Activated T-helper 2 cell treated with anti-CD3 and anti-CD28 coated beads, Interferon-gamma antibody, Interleukin-2, Interleukin-4, amounts not matched to agents 10 μg/mL and 5 μg/mL and 100 μg/mL, durations not matched to agents 14 hours and 24 hours and 36 hours (primary cell): ENCODE measurements at regions of chr1 and their contacts with region 1.

Region 1: DNA sequence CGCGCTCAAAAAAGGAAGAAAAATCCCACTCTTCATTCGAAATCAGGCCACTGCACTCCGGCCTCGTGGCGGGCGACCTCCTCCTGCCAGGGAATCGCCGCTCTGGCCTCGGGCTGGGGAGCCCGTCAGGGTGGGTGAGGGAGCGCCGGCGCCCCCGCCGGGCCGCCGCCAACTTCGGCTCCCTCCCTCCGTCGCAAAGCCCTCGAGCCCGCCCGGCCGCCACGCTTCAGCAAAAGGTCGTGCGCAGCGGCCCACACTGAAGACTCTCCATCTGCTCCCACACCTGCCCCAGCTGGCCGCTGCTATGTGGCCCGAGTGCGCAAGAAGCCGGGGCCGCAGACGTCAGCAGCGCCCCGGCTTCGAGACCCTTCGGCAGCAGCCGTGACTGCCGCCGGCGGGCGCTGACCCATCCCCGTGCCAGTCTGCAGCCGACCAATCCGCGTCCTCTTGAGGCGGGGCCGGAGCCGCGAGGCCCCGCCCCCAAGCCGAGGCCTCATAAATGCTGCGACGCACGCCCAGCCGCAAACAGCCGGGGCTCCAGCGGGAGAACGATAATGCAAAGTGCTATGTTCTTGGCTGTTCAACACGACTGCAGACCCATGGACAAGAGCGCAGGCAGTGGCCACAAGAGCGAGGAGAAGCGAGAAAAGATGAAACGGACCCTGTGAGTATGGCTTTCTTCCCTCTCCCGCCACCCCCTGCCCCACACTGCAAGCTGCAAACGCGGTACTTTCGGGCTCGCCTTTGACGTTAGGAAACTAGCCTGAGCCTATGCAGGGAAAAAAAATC is at the start of gene RGS2:
- DNase-seq: peak; percentile 82
- H3K4me3 Mint-ChIP-seq: peak within 1 kb of the TSS; percentile 95
- H3K27ac Mint-ChIP-seq: peak within 1 kb of the TSS; percentile 93
- H3K4me1 Mint-ChIP-seq: peaks cover 38% of the 10 kb centered on the region
- H3K27me3 Mint-ChIP-seq: peaks cover 7% of the 10 kb centered on the region
- total RNA-seq, gene RGS2: 5.0 and 5.8 TPM in 2 replicates

Region 2: GRCh38 chr1:192530254-192530653 is 278.5 kb before region 1 on chr1:
- intact Hi-C with region 1: loop called (anchors 5 kb)
- DNase-seq: no peak
- H3K4me3 Mint-ChIP-seq: peak overlapping the region; percentile 9
- H3K27ac Mint-ChIP-seq: no peak overlapping the region
- H3K4me1 Mint-ChIP-seq: peaks cover 39% of the 10 kb centered on the region
- H3K27me3 Mint-ChIP-seq: peaks cover 9% of the 10 kb centered on the region

Region 3: GRCh38 chr1:192620071-192620635 is 188.6 kb before region 1 on chr1:
- intact Hi-C with region 1: no loop called
- DNase-seq: no peak
- H3K4me3 Mint-ChIP-seq: no peak overlapping the region
- H3K27ac Mint-ChIP-seq: no peak overlapping the region
- H3K4me1 Mint-ChIP-seq: no peaks in the 10 kb centered on the region
- H3K27me3 Mint-ChIP-seq: peaks cover 3% of the 10 kb centered on the region

Region 4: GRCh38 chr1:192639607-192640368 is 168.9 kb before region 1 on chr1:
- intact Hi-C with region 1: loop called (anchors 10 kb)
- DNase-seq: no peak
- H3K4me3 Mint-ChIP-seq: no peak overlapping the region
- H3K27ac Mint-ChIP-seq: peak overlapping the region; percentile 39
- H3K4me1 Mint-ChIP-seq: peaks cover 11% of the 10 kb centered on the region
- H3K27me3 Mint-ChIP-seq: peaks cover 7% of the 10 kb centered on the region

Region 5: GRCh38 chr1:192967901-192968300 is 159.2 kb after region 1 on chr1:
- intact Hi-C with region 1: no loop called
- DNase-seq: no peak
- H3K4me3 Mint-ChIP-seq: no peak overlapping the region
- H3K27ac Mint-ChIP-seq: no peak overlapping the region
- H3K4me1 Mint-ChIP-seq: peaks cover 4% of the 10 kb centered on the region
- H3K27me3 Mint-ChIP-seq: no peaks in the 10 kb centered on the region

Region 6: GRCh38 chr1:192983349-192983980 is 174.8 kb after region 1 on chr1:
- intact Hi-C with region 1: loop called (anchors 2 kb)
- DNase-seq: no peak
- H3K4me3 Mint-ChIP-seq: no peak overlapping the region
- H3K27ac Mint-ChIP-seq: peak overlapping the region; percentile 75
- H3K4me1 Mint-ChIP-seq: peaks cover 35% of the 10 kb centered on the region
- H3K27me3 Mint-ChIP-seq: no peaks in the 10 kb centered on the region

Region 7: DNA sequence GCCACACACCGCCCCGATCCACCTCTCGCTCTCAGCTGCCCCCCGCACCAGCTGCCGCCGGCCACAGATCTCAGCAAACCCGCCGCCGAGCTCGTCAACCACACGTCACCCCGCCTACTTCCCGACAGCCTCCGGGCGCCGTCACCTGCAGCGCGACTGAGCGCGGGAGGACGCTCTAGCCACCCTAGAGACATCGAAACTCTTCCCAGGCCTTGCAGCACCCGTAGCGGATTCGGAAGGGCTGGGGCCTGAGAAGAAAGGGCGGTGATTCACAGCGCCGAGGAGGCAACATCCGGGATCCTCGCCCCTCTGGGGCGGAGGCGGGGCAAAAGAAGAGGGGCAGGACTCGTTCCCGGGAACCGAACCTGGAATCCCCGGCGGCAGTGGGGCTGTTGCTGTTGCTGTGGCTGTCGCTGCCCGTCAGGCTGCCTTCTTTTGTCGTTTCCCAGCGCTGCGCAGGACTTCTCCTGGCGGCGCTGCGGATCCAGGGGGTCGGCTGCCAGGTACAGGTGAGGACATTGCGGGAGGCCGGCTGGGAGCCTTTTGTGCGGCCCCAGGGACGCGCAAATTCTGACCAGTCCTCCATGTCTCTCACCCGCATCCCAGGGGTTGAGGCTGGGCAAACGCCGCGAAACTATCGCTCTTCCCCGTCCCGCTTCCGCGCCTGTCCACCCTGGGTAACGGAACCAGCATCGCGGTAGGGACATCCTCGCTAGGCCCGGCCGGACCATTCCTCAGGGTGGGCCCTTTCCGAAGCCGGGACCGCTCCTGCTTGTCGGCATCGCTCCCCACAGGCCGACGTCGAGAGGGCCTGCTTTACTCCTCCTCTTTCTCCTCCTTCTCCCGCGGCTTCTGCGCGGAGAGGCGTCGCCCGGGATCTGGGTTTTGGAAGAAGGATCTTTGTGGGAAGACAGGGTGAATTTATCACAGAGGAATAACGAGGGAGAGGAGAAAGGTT is 250.8 kb after region 1 on chr1 and contains the starts of genes RO60 and UCHL5:
- intact Hi-C with region 1: loop called (anchors 1 kb)
- DNase-seq: peak; percentile 95
- H3K4me3 Mint-ChIP-seq: peak within 1 kb of the TSS; percentile 98
- H3K27ac Mint-ChIP-seq: peak within 1 kb of the TSS; percentile 99
- H3K4me1 Mint-ChIP-seq: peaks cover 47% of the 10 kb centered on the region
- H3K27me3 Mint-ChIP-seq: no peaks in the 10 kb centered on the region
- total RNA-seq, gene RO60: 71.4 and 72.7 TPM in 2 replicates
- total RNA-seq, gene UCHL5: 77.6 and 78.5 TPM in 2 replicates

Region 8: DNA sequence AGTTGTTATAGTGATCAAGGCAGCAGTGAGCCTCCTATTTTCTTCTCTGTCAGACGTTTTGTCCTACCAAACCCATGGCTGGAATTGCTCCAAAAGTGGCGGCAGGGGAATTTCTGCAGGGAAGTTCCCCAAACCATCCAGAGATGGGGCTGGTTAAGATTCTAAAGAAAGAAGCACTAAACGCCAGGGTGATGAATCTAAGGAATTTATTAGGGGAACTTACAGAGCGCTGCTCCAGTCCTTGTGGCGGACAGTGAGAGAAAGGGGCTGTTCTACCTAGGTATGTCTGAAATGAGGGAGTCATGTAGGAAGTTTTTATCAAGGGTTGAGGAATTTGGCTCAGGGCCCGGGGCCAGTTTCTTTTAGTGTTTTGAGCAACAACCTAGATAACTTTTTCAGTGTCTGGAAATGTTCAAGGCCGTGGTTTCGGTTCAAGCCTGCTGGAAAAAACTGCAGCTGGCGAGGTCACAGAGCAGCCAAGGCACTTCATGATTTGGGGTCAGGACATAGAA is 600.1 kb after region 1 on chr1:
- intact Hi-C with region 1: loop called (anchors 5 kb)
- DNase-seq: no peak
- H3K4me3 Mint-ChIP-seq: no peak overlapping the region
- H3K27ac Mint-ChIP-seq: no peak overlapping the region
- H3K4me1 Mint-ChIP-seq: peaks cover 36% of the 10 kb centered on the region
- H3K27me3 Mint-ChIP-seq: no peaks in the 10 kb centered on the region